Ascending aorta (tissue), 2 donors: ENCODE measurements at regions of chr10 and their contacts with region 1.

Region 1: GRCh38 chr10:60816628-60817397 is 38.5 kb downstream of the CDK1 start:
- DNase-seq: no peak
- H3K4me3 ChIP-seq: peak overlapping the region in 1 of 2 donors; percentile 13
- H3K27ac ChIP-seq: peak overlapping the region in 1 of 2 donors; percentile 33
- H3K4me1 ChIP-seq: peaks cover 0 to 4% of the 10 kb centered on the region in 2 donors
- H3K27me3 ChIP-seq: no peaks in the 10 kb centered on the region
- CTCF ChIP-seq: peak; percentile 78 to 82 (median 80)

Region 2: DNA sequence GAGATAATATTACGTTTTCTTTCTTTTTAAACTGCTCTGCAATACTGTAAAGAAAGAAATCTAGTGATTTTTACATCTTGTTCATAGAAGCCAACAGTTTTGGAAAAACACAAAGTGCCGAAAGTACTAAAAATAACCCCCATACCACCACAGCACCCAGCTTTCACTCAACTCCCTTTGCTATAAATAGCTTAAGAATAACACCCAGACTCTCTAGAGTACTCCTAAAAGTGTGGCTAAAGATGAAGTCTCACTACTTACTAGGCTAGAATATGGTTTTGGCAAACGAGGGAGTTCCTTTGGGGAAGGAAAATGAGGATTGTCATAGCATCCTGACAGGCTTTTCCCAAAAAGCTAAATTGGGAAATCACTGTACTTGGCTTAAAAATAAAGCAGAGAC is 275.4 kb before region 1 on chr10:
- intact Hi-C with region 1: no loop called
- DNase-seq: no peak
- H3K4me3 ChIP-seq: peak overlapping the region in 1 of 2 donors; percentile 8
- H3K27ac ChIP-seq: peak overlapping the region in 1 of 2 donors; percentile 27
- H3K4me1 ChIP-seq: peaks cover 4 to 7% of the 10 kb centered on the region in 2 donors
- H3K27me3 ChIP-seq: no peaks in the 10 kb centered on the region
- CTCF ChIP-seq: no peak

Region 3: GRCh38 chr10:60914690-60915141 is 97.9 kb after region 1 on chr10:
- intact Hi-C with region 1: no loop called
- DNase-seq: peak in 1 of 2 donors; percentile 81
- H3K4me3 ChIP-seq: no peak overlapping the region
- H3K27ac ChIP-seq: peak overlapping the region; percentile 2 to 43
- H3K4me1 ChIP-seq: peaks cover 8 to 19% of the 10 kb centered on the region in 2 donors
- H3K27me3 ChIP-seq: no peaks in the 10 kb centered on the region
- CTCF ChIP-seq: no peak

Region 4: DNA sequence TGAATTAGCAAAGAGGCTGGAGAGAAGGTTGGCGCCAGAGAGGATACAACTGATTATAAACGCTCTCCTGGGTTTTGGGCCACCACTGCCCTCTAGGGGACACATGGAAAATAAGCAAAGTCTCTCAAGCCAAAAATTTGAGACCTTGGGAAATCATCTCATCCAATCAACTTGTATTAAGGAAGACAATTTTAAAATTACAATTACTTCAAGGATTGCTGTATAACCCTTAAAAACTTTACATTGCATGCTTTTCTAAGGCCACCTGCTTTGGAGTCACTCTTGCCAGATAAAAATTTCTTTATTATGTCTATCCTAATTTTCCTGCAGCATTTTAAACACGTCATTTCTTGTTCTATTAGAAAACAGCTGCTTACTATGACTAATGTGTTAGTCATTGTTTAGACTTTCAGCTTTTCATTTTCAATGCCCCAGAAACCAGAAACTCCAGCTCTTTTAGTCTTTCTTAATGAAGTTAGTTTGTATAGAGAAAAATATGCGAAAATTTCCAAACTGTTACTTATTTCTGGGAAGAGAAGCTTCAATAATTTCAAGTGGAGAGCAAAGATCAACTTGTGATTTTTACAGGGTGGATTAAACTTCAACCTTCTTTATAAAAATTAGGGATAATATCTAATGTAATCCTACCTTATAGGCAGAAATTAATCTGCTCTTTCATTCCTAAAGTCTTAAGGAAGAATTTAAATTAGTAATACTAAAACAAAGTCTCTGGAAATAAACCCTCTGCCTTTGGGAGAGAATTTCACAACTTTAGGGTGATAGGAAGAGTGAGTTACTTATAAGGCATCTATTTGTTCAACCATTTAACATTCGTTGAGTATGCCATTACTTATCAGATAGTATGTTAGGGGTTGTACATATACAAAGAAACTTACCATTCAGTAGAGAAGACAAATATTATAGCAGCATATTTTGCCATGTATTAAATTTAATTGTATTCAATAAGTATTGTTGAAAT is 147.7 kb after region 1 on chr10:
- intact Hi-C with region 1: loop called (anchors 1 kb)
- DNase-seq: peak in 1 of 2 donors; percentile 77
- H3K4me3 ChIP-seq: no peak overlapping the region
- H3K27ac ChIP-seq: peak overlapping the region in 1 of 2 donors; percentile 40
- H3K4me1 ChIP-seq: peaks cover 3 to 6% of the 10 kb centered on the region in 2 donors
- H3K27me3 ChIP-seq: no peaks in the 10 kb centered on the region
- CTCF ChIP-seq: peak; percentile 69 to 81 (median 80)

Region 5: DNA sequence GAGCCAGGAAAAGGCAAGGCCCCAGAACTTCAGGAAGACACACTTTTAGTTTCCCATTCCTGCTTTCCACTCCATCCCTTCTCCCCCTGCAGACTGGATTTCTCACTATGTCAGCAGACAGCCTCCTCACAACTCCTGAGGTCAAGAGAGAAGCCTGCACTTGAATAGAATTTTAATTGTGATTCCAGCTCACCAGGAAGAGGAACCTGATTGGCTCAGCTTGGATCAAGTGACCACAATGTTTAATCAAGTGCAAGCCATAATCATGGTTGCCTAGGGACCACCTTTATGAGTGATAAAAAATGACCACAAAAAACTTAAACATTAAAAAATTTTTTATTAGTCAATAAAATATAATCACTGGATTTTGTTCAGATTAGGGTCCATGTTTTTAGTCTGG is 371.9 kb after region 1 on chr10:
- intact Hi-C with region 1: loop called (anchors 10 kb)
- DNase-seq: no peak
- H3K4me3 ChIP-seq: no peak overlapping the region
- H3K27ac ChIP-seq: no peak overlapping the region
- H3K4me1 ChIP-seq: no peaks in the 10 kb centered on the region
- H3K27me3 ChIP-seq: no peaks in the 10 kb centered on the region
- CTCF ChIP-seq: no peak

Region 6: DNA sequence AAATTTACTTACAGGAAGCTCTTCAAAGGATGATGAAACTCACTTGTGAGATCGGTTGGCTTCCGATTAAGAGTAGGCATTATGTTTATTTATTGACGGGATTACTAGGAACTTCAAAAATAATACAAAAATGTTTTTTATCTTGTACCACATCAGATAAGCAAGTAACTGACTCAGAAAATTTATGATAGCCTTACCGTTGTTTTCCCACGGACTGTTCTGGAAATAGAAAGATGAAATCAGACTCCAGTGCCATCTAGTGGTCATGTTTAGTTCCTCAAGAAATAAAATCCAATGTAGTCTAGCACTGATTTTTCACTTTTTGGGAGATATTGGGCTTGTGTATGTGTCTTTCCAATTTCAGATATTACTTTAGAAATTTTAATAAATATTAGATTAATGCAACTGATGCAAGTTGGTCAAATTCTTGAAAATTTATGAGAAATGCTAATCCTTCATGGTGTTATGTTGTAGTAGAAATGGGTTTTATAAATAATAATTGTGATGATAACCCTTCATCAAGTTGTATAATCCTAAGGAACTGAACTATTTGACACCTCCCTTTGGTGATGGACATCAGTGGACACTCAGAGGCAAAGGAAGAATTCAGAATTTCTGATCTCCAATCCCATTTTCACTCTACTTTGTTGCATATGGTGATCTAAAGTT is 467.5 kb after region 1 on chr10:
- intact Hi-C with region 1: loop called (anchors 1 kb)
- DNase-seq: no peak
- H3K4me3 ChIP-seq: peak overlapping the region in 1 of 2 donors; percentile 37
- H3K27ac ChIP-seq: no peak overlapping the region
- H3K4me1 ChIP-seq: no peaks in the 10 kb centered on the region
- H3K27me3 ChIP-seq: no peaks in the 10 kb centered on the region
- CTCF ChIP-seq: peak; percentile 52 to 77 (median 73)

Region 7: DNA sequence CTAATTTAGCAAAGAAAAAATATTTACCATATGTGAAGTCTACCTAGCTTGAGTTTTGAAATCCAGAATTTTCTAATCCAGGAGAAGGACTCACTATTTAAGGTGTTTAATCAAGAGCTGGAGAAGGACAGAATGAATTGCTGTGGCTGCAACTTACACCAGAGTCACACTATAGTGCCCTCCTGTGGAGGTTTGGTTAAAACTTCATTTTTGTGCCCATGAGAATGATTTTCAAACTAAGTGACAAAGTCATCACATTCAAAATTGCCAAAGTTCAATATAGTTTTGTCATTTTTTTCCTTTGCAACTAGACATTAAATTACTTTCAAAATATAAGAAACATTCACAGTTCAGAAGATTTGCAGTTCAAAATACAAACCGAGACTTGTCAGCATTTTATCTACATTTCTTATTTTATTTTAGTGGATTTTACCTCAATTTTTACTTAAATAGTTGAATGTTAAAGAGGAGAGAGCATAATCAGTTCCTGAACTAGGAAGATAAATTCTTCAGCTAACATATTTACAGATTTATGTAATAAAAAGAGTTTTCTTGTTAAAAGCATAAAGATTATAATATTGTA is 916.6 kb after region 1 on chr10:
- intact Hi-C with region 1: loop called (anchors 5 kb)
- DNase-seq: no peak
- H3K4me3 ChIP-seq: no peak overlapping the region
- H3K27ac ChIP-seq: no peak overlapping the region
- H3K4me1 ChIP-seq: no peaks in the 10 kb centered on the region
- H3K27me3 ChIP-seq: no peaks in the 10 kb centered on the region
- CTCF ChIP-seq: peak; percentile 18 to 56 (median 56)

Region 8: GRCh38 chr10:61896854-61897661 is 1080.2 kb after region 1 on chr10:
- intact Hi-C with region 1: loop called (anchors 10 kb)
- DNase-seq: peak in 1 of 2 donors; percentile 82
- H3K4me3 ChIP-seq: peak overlapping the region; percentile 49 to 57
- H3K27ac ChIP-seq: peak overlapping the region; percentile 32 to 56
- H3K4me1 ChIP-seq: peaks cover 0 to 20% of the 10 kb centered on the region in 2 donors
- H3K27me3 ChIP-seq: no peaks in the 10 kb centered on the region
- CTCF ChIP-seq: peak; percentile 61 to 66 (median 64)